Activated CD4-positive, alpha-beta memory T cell treated with anti-CD3 and anti-CD28 coated beads for 36 hours (primary cell): ENCODE measurements at regions of chr7 and their contacts with region 1.

Region 1: DNA sequence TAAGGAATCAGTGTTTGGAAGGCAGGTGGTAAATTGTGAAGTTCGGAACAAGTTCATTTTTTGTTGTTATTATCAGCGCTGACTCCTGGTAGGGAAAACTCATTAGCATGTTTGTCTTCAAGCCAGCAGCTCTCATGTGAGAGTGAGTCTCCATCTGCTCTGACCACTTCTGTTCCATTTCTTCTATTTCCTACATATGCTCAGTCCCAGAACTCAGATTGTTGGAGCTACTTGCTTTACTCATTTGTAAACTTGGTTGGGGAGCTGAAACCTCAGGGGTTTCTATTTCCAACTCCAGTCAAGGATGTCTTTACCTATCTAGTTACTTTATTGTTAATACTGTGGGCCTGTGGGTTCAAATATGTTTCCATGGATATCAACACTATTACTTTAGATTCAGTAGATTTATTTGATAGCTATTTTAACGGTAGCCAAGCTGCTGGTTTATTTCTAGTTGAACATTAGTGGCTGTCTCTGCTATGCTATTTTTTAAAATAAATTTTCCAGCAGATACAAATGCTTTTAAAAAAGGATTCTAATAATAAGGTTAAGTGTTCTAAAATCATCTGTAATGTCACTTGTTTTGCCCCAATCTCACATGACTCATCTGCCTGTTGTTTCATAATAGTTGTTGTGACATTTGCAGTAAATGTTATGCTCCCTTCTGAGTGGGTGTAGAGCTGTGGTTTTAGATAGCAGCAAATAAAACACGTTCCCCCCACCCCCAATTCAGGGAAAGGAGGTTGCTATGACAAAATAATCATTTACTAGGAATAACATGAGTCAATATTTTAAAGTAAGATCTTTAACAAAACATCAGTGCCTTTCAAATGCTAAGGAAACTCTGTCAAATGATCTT is 143.3 kb downstream of the HDAC9 start:
- DNase-seq: peak; percentile 17
- H3K4me3 Mint-ChIP-seq: no peak overlapping the region
- H3K27ac Mint-ChIP-seq: peak overlapping the region; percentile 69
- H3K4me1 Mint-ChIP-seq: no peaks in the 10 kb centered on the region
- H3K27me3 Mint-ChIP-seq: no peaks in the 10 kb centered on the region

Region 2: DNA sequence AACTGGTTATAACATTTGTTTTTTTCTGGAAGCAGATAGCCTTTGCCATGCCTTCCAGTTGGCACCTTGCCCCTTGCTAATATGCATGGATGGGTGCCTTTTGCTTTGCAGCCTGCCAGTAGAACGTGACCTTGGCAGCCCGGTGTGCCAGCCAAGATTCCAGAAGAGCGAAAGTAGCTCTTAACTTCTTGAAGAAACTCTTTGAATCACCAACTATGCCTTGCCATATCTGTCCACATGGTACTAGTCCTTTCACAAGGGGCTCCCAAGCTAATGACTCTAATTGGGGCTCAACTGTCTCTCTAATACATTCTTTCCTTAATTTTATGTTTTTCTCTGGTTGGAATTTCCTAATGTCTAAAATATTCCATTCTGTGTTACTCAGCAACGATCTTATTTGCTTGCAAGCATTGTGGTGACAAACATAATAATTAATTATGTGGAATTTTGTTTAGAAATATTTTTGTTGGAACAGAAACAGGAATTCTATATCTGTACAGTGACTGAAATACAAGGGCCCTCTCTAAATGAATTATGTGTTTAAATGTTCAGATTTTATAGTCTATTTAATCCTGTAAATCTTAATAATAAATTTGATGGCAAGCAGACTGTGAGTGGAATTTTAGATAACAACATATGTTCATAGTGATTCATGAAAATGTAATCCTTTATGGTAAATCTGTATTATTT is 97.5 kb before region 1 on chr7:
- CTCF ChIA-PET with region 1: no interaction called
- POLR2A ChIA-PET with region 1: no interaction called
- intact Hi-C with region 1: no loop called
- DNase-seq: no peak
- H3K4me3 Mint-ChIP-seq: no peak overlapping the region
- H3K27ac Mint-ChIP-seq: no peak overlapping the region
- H3K4me1 Mint-ChIP-seq: no peaks in the 10 kb centered on the region
- H3K27me3 Mint-ChIP-seq: no peaks in the 10 kb centered on the region

Region 3: GRCh38 chr7:18648849-18649758 is 10.3 kb after region 1 on chr7:
- CTCF ChIA-PET with region 1: no interaction called
- POLR2A ChIA-PET with region 1: no interaction called
- intact Hi-C with region 1: loop called (anchors 1 kb)
- DNase-seq: no peak
- H3K4me3 Mint-ChIP-seq: no peak overlapping the region
- H3K27ac Mint-ChIP-seq: peak overlapping the region; percentile 53
- H3K4me1 Mint-ChIP-seq: no peaks in the 10 kb centered on the region
- H3K27me3 Mint-ChIP-seq: no peaks in the 10 kb centered on the region